CD4-positive, alpha-beta T cell (primary cell): ENCODE measurements at regions of chr5 and their contacts with region 1.

Region 1: DNA sequence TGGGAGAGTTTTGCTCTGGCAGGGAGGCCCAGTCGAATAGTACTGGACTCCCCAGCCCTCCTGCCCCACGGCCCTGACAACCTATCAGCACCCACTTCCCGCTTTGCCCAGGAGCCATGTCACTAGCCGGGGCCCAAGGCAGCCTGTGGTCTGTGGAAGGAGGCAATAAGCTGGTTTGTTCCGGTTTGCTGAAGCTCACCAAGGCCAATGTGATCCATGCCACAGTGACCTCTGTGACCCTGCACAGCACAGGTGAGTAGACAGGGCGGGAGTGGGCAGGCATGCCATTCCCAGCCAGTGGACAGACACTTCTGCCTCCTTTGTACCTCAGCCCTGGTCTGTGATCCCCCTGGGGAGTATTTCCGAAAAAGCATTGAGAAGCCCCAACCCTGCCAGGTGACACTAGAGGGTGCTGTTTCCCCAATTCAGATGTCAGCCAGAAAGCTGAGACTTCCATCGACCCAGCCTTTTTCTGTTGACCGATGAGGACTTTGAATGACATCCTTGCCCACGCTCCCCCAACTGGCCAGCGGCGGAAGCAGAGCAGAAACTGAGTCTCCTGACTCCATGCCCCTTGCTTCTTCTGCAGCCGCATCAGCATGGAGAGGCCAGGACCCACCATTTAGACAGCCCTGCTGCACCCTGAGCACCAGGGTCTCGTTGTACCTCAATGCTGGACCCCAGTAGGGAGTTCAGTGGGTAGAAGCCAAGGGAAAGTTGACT is 9.6 kb downstream of the PCYOX1L start:
- DNase-seq: peak; percentile 30 to 77 (median 50)
- ATAC-seq: peak; percentile 69
- H3K4me3 ChIP-seq: no peak overlapping the region
- H3K4me3 Mint-ChIP-seq: no peak overlapping the region
- H3K27ac ChIP-seq: no peak overlapping the region
- H3K27ac Mint-ChIP-seq: peak overlapping the region; percentile 24
- H3K4me1 ChIP-seq: peaks cover 23% of the 10 kb centered on the region
- H3K4me1 Mint-ChIP-seq: peaks cover 35% of the 10 kb centered on the region
- H3K27me3 ChIP-seq: peaks cover 0 to 3% of the 10 kb centered on the region in 2 experiments
- H3K27me3 Mint-ChIP-seq: no peaks in the 10 kb centered on the region
- CTCF ChIP-seq: peak; percentile 80

Region 2: DNA sequence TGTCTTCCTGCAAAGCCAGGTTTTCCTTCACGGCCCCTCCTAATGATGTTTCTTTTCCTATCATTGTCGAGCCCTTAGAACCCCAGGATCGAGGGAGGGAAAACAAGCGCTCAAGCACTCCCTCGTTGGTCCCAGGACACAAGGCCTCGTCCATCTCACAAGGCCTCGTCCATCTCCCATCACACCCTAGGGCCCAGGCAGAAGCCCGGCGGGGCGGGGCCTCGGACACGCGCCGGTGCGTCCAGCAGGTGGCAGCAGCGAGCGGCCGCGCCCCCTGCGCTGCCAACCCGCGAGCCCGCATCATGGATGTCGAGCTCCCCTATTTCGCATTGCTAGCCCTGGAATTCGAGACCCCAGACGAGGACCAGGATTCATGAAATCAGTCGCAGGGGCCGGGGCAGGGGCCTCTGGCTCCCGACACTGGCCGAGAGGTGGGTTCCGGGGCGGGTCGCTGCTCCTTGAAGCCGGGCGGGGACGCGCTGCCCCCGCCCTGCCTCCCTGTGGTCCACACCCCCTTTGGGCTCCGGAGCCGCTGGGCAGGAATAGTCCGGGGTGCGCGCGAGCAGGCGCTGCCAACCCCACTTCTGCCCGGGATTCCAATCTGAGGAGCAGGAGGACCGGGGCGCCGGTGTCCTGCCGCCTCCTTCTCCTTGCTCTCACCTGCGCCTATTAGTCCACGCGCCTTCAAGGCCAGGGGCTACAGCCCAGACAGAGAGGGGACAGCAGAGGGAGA is 226.0 kb before region 1 on chr5 and contains the start of gene ABLIM3:
- CTCF ChIA-PET with region 1: interaction called, 3 read pairs
- POLR2A ChIA-PET with region 1: no interaction called
- intact Hi-C with region 1: loop called in 1 of 2 experiments (anchors 10 kb)
- DNase-seq: peak; percentile 40 to 82 (median 64)
- ATAC-seq: peak; percentile 94
- H3K4me3 ChIP-seq: peak within 1 kb of the TSS; percentile 52
- H3K4me3 Mint-ChIP-seq: peak within 1 kb of the TSS; percentile 71
- H3K27ac ChIP-seq: no peak within 1 kb of the TSS
- H3K27ac Mint-ChIP-seq: no peak within 1 kb of the TSS
- H3K4me1 ChIP-seq: peaks cover 10% of the 10 kb centered on the region
- H3K4me1 Mint-ChIP-seq: peaks cover 5% of the 10 kb centered on the region
- H3K27me3 ChIP-seq: peaks cover 15 to 26% of the 10 kb centered on the region in 2 experiments
- H3K27me3 Mint-ChIP-seq: peaks cover 31% of the 10 kb centered on the region
- CTCF ChIP-seq: peak; percentile 83
- total RNA-seq, gene ABLIM3: not detected

Region 3: GRCh38 chr5:149251546-149251945 is 115.9 kb before region 1 on chr5:
- CTCF ChIA-PET with region 1: no interaction called
- POLR2A ChIA-PET with region 1: no interaction called
- intact Hi-C with region 1: no loop called
- DNase-seq: no peak
- ATAC-seq: no peak
- H3K4me3 ChIP-seq: no peak overlapping the region
- H3K4me3 Mint-ChIP-seq: no peak overlapping the region
- H3K27ac ChIP-seq: no peak overlapping the region
- H3K27ac Mint-ChIP-seq: no peak overlapping the region
- H3K4me1 ChIP-seq: no peaks in the 10 kb centered on the region
- H3K4me1 Mint-ChIP-seq: no peaks in the 10 kb centered on the region
- H3K27me3 ChIP-seq: peaks cover 0 to 2% of the 10 kb centered on the region in 2 experiments
- H3K27me3 Mint-ChIP-seq: no peaks in the 10 kb centered on the region
- CTCF ChIP-seq: no peak

Region 4: GRCh38 chr5:149317281-149318048 is 49.9 kb before region 1 on chr5:
- CTCF ChIA-PET with region 1: interaction called, 22 read pairs
- POLR2A ChIA-PET with region 1: interaction called, 4 read pairs
- intact Hi-C with region 1: loop called (anchors 1 kb)
- DNase-seq: peak in 13 of 14 experiments; percentile 11 to 79 (median 25)
- ATAC-seq: peak; percentile 78
- H3K4me3 ChIP-seq: no peak overlapping the region
- H3K4me3 Mint-ChIP-seq: no peak overlapping the region
- H3K27ac ChIP-seq: no peak overlapping the region
- H3K27ac Mint-ChIP-seq: no peak overlapping the region
- H3K4me1 ChIP-seq: peaks cover 5% of the 10 kb centered on the region
- H3K4me1 Mint-ChIP-seq: peaks cover 6% of the 10 kb centered on the region
- H3K27me3 ChIP-seq: no peaks in the 10 kb centered on the region
- H3K27me3 Mint-ChIP-seq: no peaks in the 10 kb centered on the region
- CTCF ChIP-seq: peak; percentile 89

Region 5: GRCh38 chr5:149352169-149352568 is 15.2 kb before region 1 on chr5:
- CTCF ChIA-PET with region 1: interaction called, 32 read pairs
- POLR2A ChIA-PET with region 1: interaction called, 24 read pairs
- intact Hi-C with region 1: no loop called
- DNase-seq: no peak
- ATAC-seq: no peak
- H3K4me3 ChIP-seq: no peak overlapping the region
- H3K4me3 Mint-ChIP-seq: no peak overlapping the region
- H3K27ac ChIP-seq: no peak overlapping the region
- H3K27ac Mint-ChIP-seq: peak overlapping the region; percentile 85
- H3K4me1 ChIP-seq: peaks cover 48% of the 10 kb centered on the region
- H3K4me1 Mint-ChIP-seq: peaks cover 77% of the 10 kb centered on the region
- H3K27me3 ChIP-seq: no peaks in the 10 kb centered on the region
- H3K27me3 Mint-ChIP-seq: no peaks in the 10 kb centered on the region
- CTCF ChIP-seq: no peak

Region 6: GRCh38 chr5:149434162-149435014 is 67.0 kb after region 1 on chr5:
- CTCF ChIA-PET with region 1: interaction called, 5 read pairs
- POLR2A ChIA-PET with region 1: no interaction called
- intact Hi-C with region 1: loop called in 1 of 2 experiments (anchors 5 kb)
- DNase-seq: peak; percentile 9 to 72 (median 39)
- ATAC-seq: peak; percentile 74
- H3K4me3 ChIP-seq: no peak overlapping the region
- H3K4me3 Mint-ChIP-seq: no peak overlapping the region
- H3K27ac ChIP-seq: no peak overlapping the region
- H3K27ac Mint-ChIP-seq: no peak overlapping the region
- H3K4me1 ChIP-seq: peaks cover 9% of the 10 kb centered on the region
- H3K4me1 Mint-ChIP-seq: peaks cover 7% of the 10 kb centered on the region
- H3K27me3 ChIP-seq: no peaks in the 10 kb centered on the region
- H3K27me3 Mint-ChIP-seq: no peaks in the 10 kb centered on the region
- CTCF ChIP-seq: peak; percentile 93